ENCODE measurements at regions of chr15 and their contacts with region 1.

Region 1: DNA sequence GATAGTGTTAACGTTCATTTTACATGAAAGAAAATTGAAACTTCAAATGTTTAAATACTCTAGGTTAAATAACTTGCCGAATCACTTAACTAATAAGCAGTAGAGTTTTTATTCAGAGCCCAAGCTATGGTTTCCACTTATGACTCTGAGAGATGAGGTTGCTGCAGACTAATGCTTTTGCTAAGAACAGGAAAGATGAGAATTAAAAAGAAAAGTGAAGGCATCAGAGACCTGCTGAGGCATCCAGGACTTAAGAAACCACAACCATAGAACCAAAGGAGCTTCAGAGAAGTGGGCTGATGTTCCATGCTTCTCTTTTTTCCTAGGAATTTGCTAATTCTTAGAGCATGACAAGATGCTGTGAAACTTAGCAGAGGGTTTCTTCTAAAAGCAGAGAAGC is 9.5 kb downstream of the HMG20A start:
- DNase-seq: no peak
- H3K4me3 Mint-ChIP-seq: no peak overlapping the region
- H3K27ac Mint-ChIP-seq: no peak overlapping the region
- H3K4me1 Mint-ChIP-seq: peaks cover 36% of the 10 kb centered on the region
- H3K27me3 Mint-ChIP-seq: no peaks in the 10 kb centered on the region

Region 2: GRCh38 chr15:77409259-77410156 is 20.7 kb before region 1 on chr15:
- intact Hi-C with region 1: loop called (anchors 1 kb)
- DNase-seq: peak; percentile 22
- H3K4me3 Mint-ChIP-seq: peak overlapping the region; percentile 63
- H3K27ac Mint-ChIP-seq: peak overlapping the region; percentile 85
- H3K4me1 Mint-ChIP-seq: peaks cover 39% of the 10 kb centered on the region
- H3K27me3 Mint-ChIP-seq: no peaks in the 10 kb centered on the region

Measured in activated T-helper 2 cell treated with anti-CD3 and anti-CD28 coated beads, Interferon-gamma antibody, Interleukin-2, Interleukin-4, amounts not matched to agents 10 μg/mL and 5 μg/mL and 100 μg/mL, durations not matched to agents 14 hours and 24 hours and 36 hours (primary cell).